Right ventricle myocardium superior (tissue), 1 donor: ENCODE measurements at regions of chr2 and their contacts with region 1.

Region 1: GRCh38 chr2:218286570-218287459 is 5.5 kb downstream of the TMBIM1 start:
- DNase-seq: peak; percentile 93
- ATAC-seq: peak; percentile 82

Region 2: GRCh38 chr2:218125626-218126080 is 161.2 kb before region 1 on chr2 and contains the start of gene CXCR2:
- intact Hi-C with region 1: no loop called
- DNase-seq: peak; percentile 68
- ATAC-seq: peak; percentile 76
- total RNA-seq, gene CXCR2: 0.89 TPM

Region 3: GRCh38 chr2:218395797-218396687 is 109.2 kb after region 1 on chr2:
- intact Hi-C with region 1: loop called (anchors 5 kb)
- DNase-seq: peak; percentile 95
- ATAC-seq: peak; percentile 69